ENCODE measurements at regions of chr16 and their contacts with region 1.

Region 1: DNA sequence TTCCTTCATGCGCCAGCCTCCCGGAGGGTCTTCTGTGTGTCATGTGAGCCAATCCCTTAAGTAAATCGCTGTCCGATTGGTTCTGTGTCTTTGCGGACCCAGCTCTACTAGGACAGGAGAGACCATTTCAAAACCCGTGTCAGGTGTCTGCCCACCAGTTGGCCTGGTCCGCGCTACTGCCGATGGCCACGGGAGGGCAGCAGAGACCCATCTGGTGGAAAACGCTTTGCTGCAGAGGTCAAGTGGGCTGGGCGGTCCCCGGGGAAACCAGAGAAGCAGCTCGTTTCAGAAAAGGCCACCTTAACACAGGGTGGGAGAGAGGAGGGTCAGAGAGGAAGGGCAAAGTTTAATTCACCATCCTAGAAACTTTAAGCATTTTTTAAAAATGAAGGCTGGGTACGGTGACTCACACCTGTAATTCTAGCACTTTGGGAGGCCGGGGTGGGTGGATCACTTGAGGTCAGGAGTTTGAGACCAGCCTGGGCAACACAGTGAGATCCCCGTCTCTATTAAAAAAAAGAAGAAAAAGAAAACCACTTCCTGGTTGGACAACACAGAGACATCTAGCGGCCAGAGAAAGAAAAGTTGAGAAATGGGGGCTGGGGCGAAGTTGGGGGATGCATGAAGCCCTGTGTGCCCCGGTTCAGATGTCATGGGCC is 2.8 kb upstream of the CIBAR2 start:
- DNase-seq: peak; percentile 86
- H3K4me3 ChIP-seq: no peak overlapping the region
- H3K27ac ChIP-seq: peak overlapping the region; percentile 9
- H3K4me1 ChIP-seq: no peaks in the 10 kb centered on the region
- H3K27me3 ChIP-seq: no peaks in the 10 kb centered on the region
- CTCF ChIP-seq: peak; percentile 98
- POLR2A ChIP-seq: no peak

Region 2: GRCh38 chr16:84893849-84894599 is 221.0 kb before region 1 on chr16:
- CTCF ChIA-PET with region 1: no interaction called
- POLR2A ChIA-PET with region 1: no interaction called
- dilution Hi-C with region 1: no loop called
- intact Hi-C with region 1: no loop called
- DNase-seq: no peak
- H3K4me3 ChIP-seq: no peak overlapping the region
- H3K27ac ChIP-seq: no peak overlapping the region
- H3K4me1 ChIP-seq: no peaks in the 10 kb centered on the region
- H3K27me3 ChIP-seq: peaks cover 0 to 2% of the 10 kb centered on the region in 2 experiments
- CTCF ChIP-seq: no peak
- POLR2A ChIP-seq: no peak

Region 3: DNA sequence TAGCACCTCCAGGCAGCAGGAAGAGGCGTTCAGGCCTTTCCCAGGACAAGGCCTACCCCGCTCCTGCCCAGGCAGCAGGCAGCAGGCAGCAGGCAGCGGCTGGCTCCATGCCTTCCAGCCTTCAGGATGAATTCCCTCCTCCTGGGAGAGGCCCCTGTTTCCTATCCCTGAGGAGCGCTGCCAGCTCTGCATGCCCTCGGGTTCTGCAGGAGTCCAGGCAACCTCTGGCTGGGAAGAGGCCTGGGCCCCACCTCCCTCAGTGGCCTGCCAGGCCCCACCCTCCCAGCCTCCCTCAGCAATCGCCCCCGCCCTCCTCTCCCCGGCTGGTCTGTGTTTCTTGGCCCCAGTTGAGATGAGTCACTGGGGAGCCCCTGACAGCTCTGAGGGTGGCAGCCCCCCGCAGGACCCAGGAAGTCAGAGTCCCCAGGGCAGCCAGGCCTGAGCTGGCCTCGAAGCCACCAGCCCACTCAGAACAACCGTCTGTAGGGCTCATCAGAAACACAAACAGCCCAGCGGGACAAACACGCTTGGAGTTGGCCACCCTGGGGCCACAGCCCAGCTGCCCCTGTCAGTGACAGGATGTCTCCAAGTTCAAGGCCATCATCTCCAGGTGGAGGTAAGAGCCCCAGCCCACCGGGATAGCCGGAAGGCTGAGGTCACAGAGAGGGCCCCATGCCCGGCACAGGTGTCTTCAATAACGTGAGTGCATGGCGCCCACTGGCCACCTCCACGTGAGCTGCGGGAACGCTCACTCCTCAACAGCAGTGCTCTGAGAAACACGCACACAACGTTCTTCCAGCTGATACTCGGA is 36.8 kb after region 1 on chr16:
- CTCF ChIA-PET with region 1: interaction called, 13 read pairs
- POLR2A ChIA-PET with region 1: no interaction called
- dilution Hi-C with region 1: no loop called
- intact Hi-C with region 1: no loop called
- DNase-seq: peak; percentile 62
- H3K4me3 ChIP-seq: no peak overlapping the region
- H3K27ac ChIP-seq: no peak overlapping the region
- H3K4me1 ChIP-seq: peaks cover 12% of the 10 kb centered on the region
- H3K27me3 ChIP-seq: no peaks in the 10 kb centered on the region
- CTCF ChIP-seq: no peak
- POLR2A ChIP-seq: no peak

Region 4: DNA sequence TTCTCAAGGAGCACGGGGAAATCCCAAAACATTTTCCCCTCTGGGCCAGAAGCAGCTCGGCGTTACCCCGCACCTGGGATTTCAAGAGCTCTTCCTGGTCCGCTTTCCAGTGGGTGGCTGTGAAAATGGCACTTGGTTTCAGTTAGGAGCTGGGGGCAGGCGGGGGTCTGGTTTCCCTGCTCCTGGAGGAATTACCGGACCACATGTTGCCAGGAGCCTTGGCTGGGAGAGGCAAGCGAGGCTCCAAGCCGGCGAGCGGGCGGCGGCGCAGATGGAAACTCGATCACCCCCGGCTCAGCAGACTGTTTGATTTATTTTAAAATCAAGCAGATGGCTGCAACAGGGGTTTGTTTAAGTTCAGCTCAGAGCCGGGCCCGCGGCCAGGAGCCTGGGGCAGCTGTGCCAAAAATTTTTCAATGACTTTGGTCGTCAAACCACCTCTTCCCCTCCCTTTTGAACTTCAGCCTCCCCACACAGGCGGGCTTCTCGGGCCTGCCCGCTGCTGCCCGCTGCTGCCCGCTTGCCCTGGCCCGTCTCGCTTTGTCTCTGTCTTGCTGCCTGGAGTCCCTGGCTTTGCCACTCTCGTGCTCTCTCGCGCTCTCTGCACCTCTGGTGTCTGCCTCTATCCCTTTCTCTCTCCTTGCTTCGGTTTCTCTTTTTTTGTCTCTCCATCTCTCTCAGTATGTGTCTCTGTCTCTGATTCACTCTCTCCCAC is 105.2 kb after region 1 on chr16:
- CTCF ChIA-PET with region 1: interaction called, 16 read pairs
- POLR2A ChIA-PET with region 1: no interaction called
- dilution Hi-C with region 1: no loop called
- intact Hi-C with region 1: no loop called
- DNase-seq: peak; percentile 79
- H3K4me3 ChIP-seq: peak overlapping the region in 1 of 3 experiments; percentile 18
- H3K27ac ChIP-seq: peak overlapping the region; percentile 24
- H3K4me1 ChIP-seq: peaks cover 10% of the 10 kb centered on the region
- H3K27me3 ChIP-seq: no peaks in the 10 kb centered on the region
- CTCF ChIP-seq: no peak
- POLR2A ChIP-seq: no peak

Region 5: GRCh38 chr16:85253084-85253941 is 138.3 kb after region 1 on chr16:
- CTCF ChIA-PET with region 1: interaction called, 34 read pairs
- POLR2A ChIA-PET with region 1: no interaction called
- dilution Hi-C with region 1: no loop called
- intact Hi-C with region 1: loop called (anchors 2 kb)
- DNase-seq: peak; percentile 28
- H3K4me3 ChIP-seq: no peak overlapping the region
- H3K27ac ChIP-seq: no peak overlapping the region
- H3K4me1 ChIP-seq: no peaks in the 10 kb centered on the region
- H3K27me3 ChIP-seq: no peaks in the 10 kb centered on the region
- CTCF ChIP-seq: peak; percentile 92 to 97
- POLR2A ChIP-seq: no peak

Region 6: DNA sequence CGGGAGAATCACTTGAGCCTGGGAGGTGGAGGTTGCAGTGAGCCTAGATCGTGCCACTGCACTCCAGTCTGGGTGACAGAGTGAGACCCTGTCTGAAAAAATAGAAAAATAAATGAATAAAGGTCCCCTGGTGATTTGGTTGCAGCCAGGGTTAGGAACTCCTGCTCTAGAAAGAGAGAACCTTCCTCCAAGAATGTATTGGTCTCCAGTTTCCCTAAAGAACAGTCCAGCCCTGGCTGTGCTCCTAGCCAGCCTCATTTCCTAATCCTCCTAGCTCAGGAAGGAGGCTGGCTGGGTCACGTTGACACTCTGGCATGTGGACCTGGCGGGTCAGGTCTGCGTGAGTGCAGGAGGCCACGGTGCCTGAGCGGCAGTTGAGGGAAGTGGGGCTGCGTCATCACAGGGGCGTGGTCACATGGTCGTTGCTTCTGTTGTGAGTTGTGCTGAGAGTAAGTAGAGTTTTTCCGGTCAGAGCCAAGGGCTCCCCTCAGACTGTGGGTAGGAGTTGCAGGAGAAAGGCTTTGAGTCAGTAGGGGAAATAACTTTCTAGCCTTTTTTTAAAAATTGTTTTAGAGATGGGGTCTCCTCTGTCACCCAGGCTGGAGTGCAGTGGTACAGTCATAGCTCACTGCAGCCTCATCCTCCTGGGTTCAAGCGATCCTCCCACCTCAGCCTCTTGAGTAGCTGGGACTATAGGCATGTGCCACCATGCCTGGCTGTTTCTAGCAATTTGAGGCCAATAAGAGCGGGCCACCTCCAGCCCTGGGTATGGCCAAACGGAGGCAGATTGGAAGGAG is 191.2 kb after region 1 on chr16:
- CTCF ChIA-PET with region 1: interaction called, 13 read pairs
- POLR2A ChIA-PET with region 1: no interaction called
- dilution Hi-C with region 1: no loop called
- intact Hi-C with region 1: no loop called
- DNase-seq: peak; percentile 92
- H3K4me3 ChIP-seq: no peak overlapping the region
- H3K27ac ChIP-seq: no peak overlapping the region
- H3K4me1 ChIP-seq: peaks cover 14% of the 10 kb centered on the region
- H3K27me3 ChIP-seq: no peaks in the 10 kb centered on the region
- CTCF ChIP-seq: no peak
- POLR2A ChIP-seq: no peak

Region 7: DNA sequence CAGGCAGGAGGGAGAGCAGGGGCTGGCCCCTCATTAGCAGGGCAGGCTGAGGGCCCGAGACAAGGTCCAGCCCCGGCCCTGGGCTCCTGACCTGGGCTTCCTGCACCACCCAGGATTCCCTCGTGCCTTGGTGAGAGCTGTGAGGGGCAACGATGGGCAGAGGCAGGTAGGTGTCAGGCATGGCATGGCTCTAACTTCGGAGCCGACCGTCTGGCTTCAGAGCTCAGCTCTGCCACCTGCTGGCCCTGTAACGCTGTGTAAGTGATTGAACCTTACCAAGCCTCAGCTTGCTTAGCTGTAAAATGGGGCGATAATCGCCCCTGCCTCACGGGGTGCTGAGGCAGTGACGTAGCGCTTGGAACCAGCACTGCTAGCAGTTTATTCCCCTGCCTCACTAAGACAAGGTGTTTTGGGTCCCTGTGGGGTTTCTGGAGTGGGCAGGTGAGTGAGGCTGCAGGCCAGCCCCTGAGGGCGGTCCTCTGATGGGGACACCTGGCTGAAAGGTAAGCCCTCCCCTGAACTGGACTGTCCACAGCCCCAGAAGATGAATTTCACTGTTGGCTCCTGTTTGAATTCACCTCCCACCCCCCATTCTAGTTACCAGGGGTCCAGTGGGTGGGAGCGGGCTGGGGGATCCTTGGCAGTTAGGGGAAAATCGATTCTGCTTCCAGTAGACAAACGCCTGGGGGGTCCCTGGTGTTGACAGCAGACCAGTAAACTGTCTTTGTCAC is 313.3 kb after region 1 on chr16:
- CTCF ChIA-PET with region 1: interaction called, 16 read pairs
- POLR2A ChIA-PET with region 1: no interaction called
- dilution Hi-C with region 1: no loop called
- intact Hi-C with region 1: loop called (anchors 5 kb)
- DNase-seq: peak; percentile 8
- H3K4me3 ChIP-seq: no peak overlapping the region
- H3K27ac ChIP-seq: no peak overlapping the region
- H3K4me1 ChIP-seq: no peaks in the 10 kb centered on the region
- H3K27me3 ChIP-seq: no peaks in the 10 kb centered on the region
- CTCF ChIP-seq: peak; percentile 39 to 65
- POLR2A ChIP-seq: no peak

Measured in endothelial cell of umbilical vein (primary cell).